Caco-2 (cell line): ENCODE measurements at regions of chr20 and their contacts with region 1.

Region 1: GRCh38 chr20:46757754-46758678 is 48.6 kb downstream of the SLC2A10 start:
- DNase-seq: peak; percentile 80 to 85
- H3K4me3 ChIP-seq: no peak overlapping the region
- H3K4me3 Mint-ChIP-seq: no peak overlapping the region
- H3K27ac Mint-ChIP-seq: no peak overlapping the region
- H3K4me1 ChIP-seq: no peaks in the 10 kb centered on the region
- H3K4me1 Mint-ChIP-seq: peaks cover 7% of the 10 kb centered on the region
- H3K27me3 ChIP-seq: peaks cover 1% of the 10 kb centered on the region; the same call in 1 of the 2 replicates
- H3K27me3 Mint-ChIP-seq: peaks cover 18% of the 10 kb centered on the region
- CTCF ChIP-seq: peak; percentile 99 to 100

Region 2: DNA sequence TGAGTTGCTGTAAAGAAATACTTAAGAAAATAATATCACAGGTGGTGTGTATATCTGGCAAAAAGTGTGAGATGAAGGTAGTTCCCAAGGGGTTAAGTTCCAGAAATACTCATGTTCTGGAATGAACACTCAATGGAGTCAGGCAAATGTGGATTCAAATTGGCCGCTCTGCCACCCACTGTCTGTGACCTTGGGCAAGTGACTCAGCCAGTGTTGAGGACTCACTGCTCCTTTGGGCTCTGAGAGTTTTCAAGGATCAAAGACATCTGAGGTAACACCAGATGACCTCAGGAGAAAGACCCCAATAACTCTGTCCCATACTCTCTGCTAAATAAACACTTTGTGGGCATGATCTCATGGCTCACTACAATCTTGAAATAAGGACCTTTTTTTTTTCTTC is 77.4 kb after region 1 on chr20:
- CTCF ChIA-PET with region 1: no interaction called
- POLR2A ChIA-PET with region 1: no interaction called
- intact Hi-C with region 1: no loop called
- DNase-seq: no peak
- H3K4me3 ChIP-seq: no peak overlapping the region
- H3K4me3 Mint-ChIP-seq: no peak overlapping the region
- H3K27ac Mint-ChIP-seq: no peak overlapping the region
- H3K4me1 ChIP-seq: no peaks in the 10 kb centered on the region
- H3K4me1 Mint-ChIP-seq: peaks cover 7% of the 10 kb centered on the region
- H3K27me3 ChIP-seq: peaks cover 3% of the 10 kb centered on the region; the same call in 1 of the 2 replicates
- H3K27me3 Mint-ChIP-seq: peaks cover 19% of the 10 kb centered on the region
- CTCF ChIP-seq: no peak

Region 3: GRCh38 chr20:46850416-46850815 is 92.4 kb after region 1 on chr20:
- CTCF ChIA-PET with region 1: no interaction called
- POLR2A ChIA-PET with region 1: no interaction called
- intact Hi-C with region 1: no loop called
- DNase-seq: no peak
- H3K4me3 ChIP-seq: no peak overlapping the region
- H3K4me3 Mint-ChIP-seq: no peak overlapping the region
- H3K27ac Mint-ChIP-seq: no peak overlapping the region
- H3K4me1 ChIP-seq: no peaks in the 10 kb centered on the region
- H3K4me1 Mint-ChIP-seq: no peaks in the 10 kb centered on the region
- H3K27me3 ChIP-seq: no peaks in the 10 kb centered on the region
- H3K27me3 Mint-ChIP-seq: peaks cover 14% of the 10 kb centered on the region
- CTCF ChIP-seq: no peak

Region 4: GRCh38 chr20:47013607-47014006 is 255.6 kb after region 1 on chr20:
- CTCF ChIA-PET with region 1: no interaction called
- POLR2A ChIA-PET with region 1: no interaction called
- intact Hi-C with region 1: loop called (anchors 5 kb)
- DNase-seq: no peak
- H3K4me3 ChIP-seq: no peak overlapping the region
- H3K4me3 Mint-ChIP-seq: no peak overlapping the region
- H3K27ac Mint-ChIP-seq: no peak overlapping the region
- H3K4me1 ChIP-seq: no peaks in the 10 kb centered on the region; the same call in 1 of the 2 replicates
- H3K4me1 Mint-ChIP-seq: peaks cover 10% of the 10 kb centered on the region
- H3K27me3 ChIP-seq: peaks cover 3% of the 10 kb centered on the region
- H3K27me3 Mint-ChIP-seq: peaks cover 18% of the 10 kb centered on the region
- CTCF ChIP-seq: no peak